Panc1 (cell line): ENCODE measurements at regions of chr2 and their contacts with region 1.

Region 1: GRCh38 chr2:202178342-202178958 is 59.9 kb downstream of the SUMO1 start:
- DNase-seq: peak; percentile 58
- ATAC-seq: peak; percentile 97
- H3K4me3 ChIP-seq: no peak overlapping the region
- H3K27ac ChIP-seq: peak overlapping the region; percentile 36; the same call in 1 of the 2 replicates
- H3K4me1 ChIP-seq: no peaks in the 10 kb centered on the region
- H3K27me3 ChIP-seq: no peaks in the 10 kb centered on the region
- CTCF ChIP-seq: peak; percentile 82

Region 2: GRCh38 chr2:201795607-201796477 is 382.6 kb before region 1 on chr2:
- CTCF ChIA-PET with region 1: no interaction called
- POLR2A ChIA-PET with region 1: no interaction called
- in situ Hi-C with region 1: no loop called
- intact Hi-C with region 1: loop called (anchors 1 kb)
- DNase-seq: peak; percentile 33
- ATAC-seq: peak; percentile 54
- H3K4me3 ChIP-seq: no peak overlapping the region
- H3K27ac ChIP-seq: peak overlapping the region; percentile 93
- H3K4me1 ChIP-seq: peaks cover 29% of the 10 kb centered on the region
- H3K27me3 ChIP-seq: no peaks in the 10 kb centered on the region
- CTCF ChIP-seq: peak; percentile 90

Region 3: GRCh38 chr2:202033321-202034248 is 144.9 kb before region 1 on chr2 and contains the start of gene FZD7:
- CTCF ChIA-PET with region 1: no interaction called
- POLR2A ChIA-PET with region 1: no interaction called
- in situ Hi-C with region 1: no loop called
- intact Hi-C with region 1: loop called (anchors 2 kb)
- DNase-seq: peak; percentile 45
- ATAC-seq: peak; percentile 89
- H3K4me3 ChIP-seq: peak within 1 kb of the TSS; percentile 67 to 92
- H3K27ac ChIP-seq: peak within 1 kb of the TSS; percentile 87
- H3K4me1 ChIP-seq: peaks cover 19% of the 10 kb centered on the region
- H3K27me3 ChIP-seq: no peaks in the 10 kb centered on the region
- CTCF ChIP-seq: peak; percentile 37
- total RNA-seq, gene FZD7: 38.1 TPM

Region 4: DNA sequence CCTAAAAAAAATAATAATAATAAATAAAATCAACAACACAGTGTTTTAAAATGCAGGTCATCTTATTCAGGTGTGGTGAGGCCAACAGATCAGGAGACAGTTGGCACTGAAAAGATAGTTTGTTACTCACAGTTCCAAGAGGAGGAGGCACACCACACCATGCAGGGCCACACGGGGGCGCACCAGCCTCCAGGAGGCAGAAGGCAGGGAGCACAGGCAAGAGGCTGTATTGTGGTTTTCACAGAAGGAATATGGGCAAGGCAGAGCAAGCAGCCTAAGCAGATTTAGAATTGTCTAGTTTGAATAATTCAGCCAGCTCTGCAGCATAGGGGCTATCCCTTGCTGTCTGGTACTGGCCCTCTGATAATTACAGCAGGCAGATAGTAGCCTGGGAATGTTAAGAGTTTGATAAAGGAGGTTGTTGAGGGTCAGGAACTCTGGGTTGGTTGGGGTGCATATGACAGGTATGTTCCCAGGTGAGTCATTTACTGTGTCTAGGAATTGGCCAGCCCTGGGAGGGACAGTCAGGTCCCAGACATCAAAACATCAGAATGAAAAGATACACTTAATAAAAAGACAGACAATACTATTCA is 74.1 kb before region 1 on chr2:
- CTCF ChIA-PET with region 1: no interaction called
- POLR2A ChIA-PET with region 1: no interaction called
- in situ Hi-C with region 1: no loop called
- intact Hi-C with region 1: loop called (anchors 5 kb)
- DNase-seq: peak; percentile 28
- ATAC-seq: peak; percentile 83
- H3K4me3 ChIP-seq: no peak overlapping the region
- H3K27ac ChIP-seq: no peak overlapping the region
- H3K4me1 ChIP-seq: no peaks in the 10 kb centered on the region; the same call in 1 of the 2 replicates
- H3K27me3 ChIP-seq: no peaks in the 10 kb centered on the region
- CTCF ChIP-seq: peak; percentile 89

Region 5: DNA sequence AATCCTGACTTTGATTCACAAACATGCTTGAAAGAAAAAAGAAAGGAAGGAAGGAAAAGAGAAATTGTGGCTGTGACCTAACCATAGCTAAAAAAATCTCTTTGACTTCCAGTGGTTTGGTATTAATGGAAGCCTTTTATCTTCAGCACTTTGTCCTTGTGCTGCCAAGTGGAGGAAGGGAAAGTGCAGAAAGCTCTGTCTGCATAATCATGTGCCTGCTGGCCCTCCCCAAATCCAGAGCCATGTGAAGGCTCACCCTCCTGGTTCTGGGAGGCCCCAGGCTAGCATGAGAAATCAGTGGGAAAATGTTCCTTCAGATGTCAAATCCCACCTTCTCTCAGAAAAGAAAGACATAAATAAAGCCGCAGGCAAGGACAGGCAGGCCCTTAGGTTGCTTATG is 149.4 kb after region 1 on chr2:
- CTCF ChIA-PET with region 1: no interaction called
- POLR2A ChIA-PET with region 1: no interaction called
- in situ Hi-C with region 1: no loop called
- intact Hi-C with region 1: no loop called
- DNase-seq: no peak
- ATAC-seq: no peak
- H3K4me3 ChIP-seq: no peak overlapping the region
- H3K27ac ChIP-seq: no peak overlapping the region
- H3K4me1 ChIP-seq: no peaks in the 10 kb centered on the region
- H3K27me3 ChIP-seq: no peaks in the 10 kb centered on the region
- CTCF ChIP-seq: no peak